Prostate gland (tissue), 2 donors: ENCODE measurements at regions of chr11 and their contacts with region 1.

Region 1: GRCh38 chr11:27485930-27486773 is 13.6 kb upstream of the LGR4 start:
- DNase-seq: peak; percentile 59
- H3K4me3 ChIP-seq: no peak overlapping the region
- H3K27ac ChIP-seq: no peak overlapping the region
- H3K4me1 ChIP-seq: no peaks in the 10 kb centered on the region
- H3K27me3 ChIP-seq: no peaks in the 10 kb centered on the region
- CTCF ChIP-seq: peak; percentile 80 to 97 (median 88)
- POLR2A ChIP-seq: no peak

Region 2: GRCh38 chr11:27183672-27184457 is 302.3 kb before region 1 on chr11:
- intact Hi-C with region 1: loop called (anchors 2 kb)
- DNase-seq: peak; percentile 64
- H3K4me3 ChIP-seq: no peak overlapping the region
- H3K27ac ChIP-seq: no peak overlapping the region
- H3K4me1 ChIP-seq: no peaks in the 10 kb centered on the region
- H3K27me3 ChIP-seq: no peaks in the 10 kb centered on the region
- CTCF ChIP-seq: peak; percentile 32 to 86 (median 77)
- POLR2A ChIP-seq: no peak

Region 3: DNA sequence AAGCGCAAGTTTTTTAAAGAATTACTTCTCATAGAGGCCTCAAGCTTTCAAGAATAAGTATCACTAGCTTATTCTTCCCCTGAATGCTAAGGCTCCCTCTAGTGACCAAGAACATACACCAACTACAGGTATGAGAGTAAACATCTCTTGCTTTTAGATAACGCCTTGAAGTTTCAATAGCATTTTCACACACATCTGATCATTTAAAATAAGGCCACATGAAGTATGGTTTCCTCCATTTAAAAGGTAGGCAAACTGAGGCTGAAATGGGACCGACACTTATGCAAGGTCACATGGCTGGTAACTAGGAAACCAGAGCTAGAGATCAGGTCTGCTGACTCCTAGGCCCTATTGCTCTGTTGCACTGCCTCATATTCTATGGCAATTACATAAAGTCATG is 189.7 kb before region 1 on chr11:
- intact Hi-C with region 1: loop called (anchors 5 kb)
- DNase-seq: peak; percentile 45
- H3K4me3 ChIP-seq: no peak overlapping the region
- H3K27ac ChIP-seq: no peak overlapping the region
- H3K4me1 ChIP-seq: no peaks in the 10 kb centered on the region
- H3K27me3 ChIP-seq: no peaks in the 10 kb centered on the region
- CTCF ChIP-seq: peak; percentile 29 to 76 (median 62)
- POLR2A ChIP-seq: no peak

Region 4: GRCh38 chr11:27443746-27444507 is 42.2 kb before region 1 on chr11:
- intact Hi-C with region 1: no loop called
- DNase-seq: no peak
- H3K4me3 ChIP-seq: no peak overlapping the region
- H3K27ac ChIP-seq: no peak overlapping the region
- H3K4me1 ChIP-seq: no peaks in the 10 kb centered on the region
- H3K27me3 ChIP-seq: no peaks in the 10 kb centered on the region
- CTCF ChIP-seq: no peak
- POLR2A ChIP-seq: no peak